Caco-2 (cell line): ENCODE measurements at regions of chr17 and their contacts with region 1.

Region 1: DNA sequence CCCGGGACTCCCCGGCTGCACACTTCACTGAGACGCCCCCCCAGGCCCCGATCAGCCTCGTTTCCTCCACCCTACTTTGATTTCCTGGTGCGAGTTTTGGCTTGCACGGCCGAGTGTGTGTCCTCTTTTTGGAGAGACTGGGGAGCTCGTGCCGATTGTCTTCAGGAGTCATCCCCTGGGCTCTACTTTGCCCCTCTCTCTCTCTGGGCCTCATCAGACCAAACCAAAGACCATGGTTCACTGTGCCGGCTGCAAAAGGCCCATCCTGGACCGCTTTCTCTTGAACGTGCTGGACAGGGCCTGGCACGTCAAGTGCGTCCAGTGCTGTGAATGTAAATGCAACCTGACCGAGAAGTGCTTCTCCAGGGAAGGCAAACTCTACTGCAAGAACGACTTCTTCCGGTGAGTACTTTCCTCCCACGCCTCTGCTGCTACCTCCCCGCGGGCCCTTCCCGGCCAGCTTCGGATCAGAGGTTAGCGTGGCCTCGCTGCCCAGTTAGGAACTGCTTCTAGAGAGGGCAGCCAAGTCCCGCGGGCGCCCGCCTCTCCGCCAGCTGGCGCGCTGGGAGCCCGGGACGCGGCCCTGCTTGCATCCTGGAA is 791 bp downstream of the LHX1 start:
- DNase-seq: no peak
- H3K4me3 ChIP-seq: peak overlapping the region; percentile 11; the same call in 1 of the 2 replicates
- H3K4me3 Mint-ChIP-seq: peak overlapping the region; percentile 83
- H3K27ac Mint-ChIP-seq: no peak overlapping the region
- H3K4me1 ChIP-seq: peaks cover 23% of the 10 kb centered on the region
- H3K4me1 Mint-ChIP-seq: peaks cover 6% of the 10 kb centered on the region
- H3K27me3 ChIP-seq: peaks cover 28% of the 10 kb centered on the region
- H3K27me3 Mint-ChIP-seq: peaks cover 42% of the 10 kb centered on the region
- CTCF ChIP-seq: no peak

Region 2: GRCh38 chr17:36948717-36949460 is 10.8 kb after region 1 on chr17 and contains the start of gene AATF:
- CTCF ChIA-PET with region 1: no interaction called
- POLR2A ChIA-PET with region 1: interaction called, 4 read pairs
- intact Hi-C with region 1: loop called (anchors 1 kb)
- DNase-seq: peak; percentile 97 to 99
- H3K4me3 ChIP-seq: peak within 1 kb of the TSS; percentile 91
- H3K4me3 Mint-ChIP-seq: peak within 1 kb of the TSS; percentile 79
- H3K27ac Mint-ChIP-seq: peak within 1 kb of the TSS; percentile 74
- H3K4me1 ChIP-seq: peaks cover 8% of the 10 kb centered on the region; the same call in 1 of the 2 replicates
- H3K4me1 Mint-ChIP-seq: peaks cover 7% of the 10 kb centered on the region
- H3K27me3 ChIP-seq: no peaks in the 10 kb centered on the region
- H3K27me3 Mint-ChIP-seq: peaks cover 7% of the 10 kb centered on the region
- CTCF ChIP-seq: no peak
- total RNA-seq, gene AATF: 81.7 and 87.6 TPM in 2 replicates